Uterus (tissue), 4 donors: ENCODE measurements at regions of chr6 and their contacts with region 1.

Region 1: GRCh38 chr6:110815217-110816109 is at the start of gene CDK19:
- DNase-seq: peak; percentile 97
- H3K4me3 ChIP-seq: peak within 1 kb of the TSS; percentile 87 to 91
- H3K27ac ChIP-seq: peak within 1 kb of the TSS; percentile 97 to 98
- H3K4me1 ChIP-seq: no peaks in the 10 kb centered on the region
- H3K27me3 ChIP-seq: no peaks in the 10 kb centered on the region
- CTCF ChIP-seq: peak in 2 of 4 experiments; percentile 6 to 13
- POLR2A ChIP-seq: peak; percentile 49 to 70
- total RNA-seq, gene CDK19: 1.0 to 34.3 (median 12.9) TPM

Region 2: GRCh38 chr6:110873981-110874879 is 58.8 kb after region 1 on chr6 and contains the start of gene AMD1:
- intact Hi-C with region 1: loop called (anchors 10 kb)
- DNase-seq: peak; percentile 97 to 98
- H3K4me3 ChIP-seq: peak within 1 kb of the TSS; percentile 84 to 93
- H3K27ac ChIP-seq: peak within 1 kb of the TSS; percentile 85 to 93
- H3K4me1 ChIP-seq: peaks cover 10 to 11% of the 10 kb centered on the region in 2 donors
- H3K27me3 ChIP-seq: no peaks in the 10 kb centered on the region
- CTCF ChIP-seq: peak in 1 of 4 experiments; percentile 30
- POLR2A ChIP-seq: peak; percentile 95 to 96
- total RNA-seq, gene AMD1: 75.8 to 121 (median 101) TPM

Region 3: GRCh38 chr6:110897433-110897832 is 82.0 kb after region 1 on chr6:
- intact Hi-C with region 1: no loop called
- DNase-seq: no peak
- H3K4me3 ChIP-seq: no peak overlapping the region
- H3K27ac ChIP-seq: no peak overlapping the region
- H3K4me1 ChIP-seq: no peaks in the 10 kb centered on the region
- H3K27me3 ChIP-seq: no peaks in the 10 kb centered on the region
- CTCF ChIP-seq: no peak
- POLR2A ChIP-seq: no peak